ENCODE measurements at regions of chr16 and their contacts with region 1.

Region 1: DNA sequence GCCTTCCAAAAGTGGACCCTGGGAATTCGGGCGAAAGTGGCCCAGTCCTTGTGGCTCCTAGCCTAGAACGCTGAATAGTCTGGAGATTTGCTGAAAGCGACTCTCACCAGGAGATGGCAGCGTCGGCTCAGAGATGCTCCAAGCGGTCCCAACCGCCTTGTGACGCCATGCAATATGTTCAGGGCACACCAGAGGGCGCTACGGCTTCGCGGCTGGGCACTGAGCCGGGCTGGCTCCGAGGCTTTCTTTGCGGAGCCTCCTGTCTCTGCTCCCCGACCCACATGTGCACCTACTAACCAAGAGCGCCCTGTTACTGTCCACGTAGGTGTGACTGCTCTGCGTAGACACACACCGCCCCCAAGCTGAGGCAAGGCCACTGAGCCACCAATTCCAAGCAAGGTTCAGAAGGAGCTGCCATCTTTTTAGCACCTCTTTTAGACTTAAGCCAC is 36.9 kb downstream of the SYCE1L start:
- DNase-seq: peak; percentile 87
- H3K4me3 ChIP-seq: peak overlapping the region; percentile 51
- H3K27ac ChIP-seq: no peak overlapping the region
- H3K4me1 ChIP-seq: no peaks in the 10 kb centered on the region
- H3K27me3 ChIP-seq: peaks cover 24% of the 10 kb centered on the region

Region 2: GRCh38 chr16:77183137-77183536 is 53.0 kb before region 1 on chr16:
- in situ Hi-C with region 1: no loop called
- DNase-seq: no peak
- H3K4me3 ChIP-seq: no peak overlapping the region
- H3K27ac ChIP-seq: no peak overlapping the region
- H3K4me1 ChIP-seq: no peaks in the 10 kb centered on the region
- H3K27me3 ChIP-seq: no peaks in the 10 kb centered on the region

Region 3: DNA sequence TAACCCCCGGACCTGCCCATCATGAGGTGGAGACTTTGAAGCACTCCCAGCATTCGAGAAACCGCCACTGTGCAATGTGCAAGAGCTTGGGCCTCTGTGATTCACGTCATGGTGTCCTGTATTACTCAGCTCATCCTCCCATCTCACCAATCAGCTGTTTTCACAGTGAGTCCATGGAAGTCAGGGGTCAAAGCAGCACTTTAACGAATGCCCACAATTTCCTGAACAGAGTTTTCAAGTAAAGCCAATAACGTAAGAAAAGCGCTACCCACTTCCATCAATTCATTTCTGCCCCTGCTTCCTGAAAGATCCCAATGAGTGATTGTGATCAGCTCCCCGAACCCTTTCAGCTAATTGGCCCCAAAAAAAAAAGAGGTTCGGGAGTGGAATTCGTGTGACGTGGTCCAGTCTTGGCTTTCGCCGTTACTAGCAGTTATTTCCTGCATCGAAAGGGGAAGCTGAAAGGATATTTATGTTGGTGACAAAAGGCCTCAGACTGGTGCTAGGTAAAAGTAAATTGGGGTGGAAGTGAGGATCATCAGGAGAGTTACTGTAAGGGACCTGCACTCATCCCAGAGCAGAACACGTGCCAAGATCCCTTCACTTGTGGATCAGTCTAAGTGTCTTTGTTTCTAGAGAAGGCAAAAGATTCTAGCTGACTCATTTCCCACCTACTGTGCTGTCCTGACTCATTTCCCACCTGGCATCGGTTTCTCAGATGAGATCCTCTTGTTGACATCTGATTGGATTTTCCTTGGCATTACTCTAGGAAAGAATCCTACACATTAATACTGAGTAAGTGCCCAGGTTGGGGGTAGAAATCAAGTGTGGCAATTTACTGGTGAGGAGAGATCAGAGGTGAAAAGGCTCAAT is 349.5 kb after region 1 on chr16:
- in situ Hi-C with region 1: loop called (anchors 5 kb)
- DNase-seq: peak; percentile 35
- H3K4me3 ChIP-seq: no peak overlapping the region
- H3K27ac ChIP-seq: no peak overlapping the region
- H3K4me1 ChIP-seq: no peaks in the 10 kb centered on the region
- H3K27me3 ChIP-seq: peaks cover 14% of the 10 kb centered on the region

Region 4: GRCh38 chr16:77993111-77993985 is 757.3 kb after region 1 on chr16:
- in situ Hi-C with region 1: loop called (anchors 25 kb)
- DNase-seq: peak; percentile 79
- H3K4me3 ChIP-seq: peak overlapping the region; percentile 57
- H3K27ac ChIP-seq: peak overlapping the region; percentile 55
- H3K4me1 ChIP-seq: peaks cover 13% of the 10 kb centered on the region; the same call in 1 of the 2 replicates
- H3K27me3 ChIP-seq: no peaks in the 10 kb centered on the region

Measured in GM23248 (cell line).